Activated naive CD4-positive, alpha-beta T cell treated with anti-CD3 and anti-CD28 coated beads for 36 hours (primary cell): ENCODE measurements at regions of chr12 and their contacts with region 1.

Region 1: DNA sequence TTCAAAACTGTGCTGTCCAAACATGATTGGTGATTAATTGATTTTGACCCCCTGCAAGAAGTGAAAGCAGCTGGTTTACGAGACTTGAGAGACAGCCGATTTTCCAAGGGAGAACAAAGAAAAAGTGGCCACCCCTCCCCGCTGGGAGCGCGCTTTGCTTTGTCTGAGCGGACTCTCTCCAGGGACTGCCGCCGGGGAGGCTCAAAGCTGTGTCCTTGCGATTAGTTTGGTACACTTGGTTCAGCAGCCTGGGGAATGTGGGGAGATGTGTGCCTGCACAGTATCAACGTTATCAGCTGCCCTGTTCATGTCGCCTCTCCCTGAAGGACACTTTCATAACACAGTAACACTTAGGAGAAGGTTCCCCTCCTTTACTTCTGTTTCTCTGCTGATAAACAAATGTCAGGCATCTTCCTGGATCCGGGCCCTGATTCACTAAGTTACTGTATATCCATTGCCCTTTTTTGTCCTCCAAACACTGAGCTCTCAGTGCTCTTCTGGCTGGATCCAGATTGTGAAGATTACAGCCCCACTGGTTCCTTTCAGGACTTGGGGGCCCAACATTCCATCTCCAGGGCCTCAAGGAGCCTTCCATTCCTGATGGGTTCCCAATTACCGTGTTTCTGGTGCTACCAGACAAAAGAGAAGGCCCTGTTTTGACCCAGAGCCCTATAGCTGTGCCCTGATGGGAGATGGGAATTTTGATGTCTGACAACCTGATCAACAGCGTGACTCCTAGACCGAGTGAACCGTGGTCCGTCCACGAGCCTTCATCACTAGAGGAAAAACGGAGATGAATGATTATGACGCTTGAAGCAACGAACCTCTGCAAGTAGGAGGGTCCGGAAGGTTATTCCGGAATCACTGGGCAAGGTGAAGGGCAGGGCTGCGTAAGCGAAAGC is 31.7 kb upstream of the TUBA1C start:
- DNase-seq: no peak
- H3K4me3 Mint-ChIP-seq: peak overlapping the region; percentile 85
- H3K27ac Mint-ChIP-seq: peak overlapping the region; percentile 81
- H3K4me1 Mint-ChIP-seq: peaks cover 12% of the 10 kb centered on the region
- H3K27me3 Mint-ChIP-seq: no peaks in the 10 kb centered on the region

Region 2: DNA sequence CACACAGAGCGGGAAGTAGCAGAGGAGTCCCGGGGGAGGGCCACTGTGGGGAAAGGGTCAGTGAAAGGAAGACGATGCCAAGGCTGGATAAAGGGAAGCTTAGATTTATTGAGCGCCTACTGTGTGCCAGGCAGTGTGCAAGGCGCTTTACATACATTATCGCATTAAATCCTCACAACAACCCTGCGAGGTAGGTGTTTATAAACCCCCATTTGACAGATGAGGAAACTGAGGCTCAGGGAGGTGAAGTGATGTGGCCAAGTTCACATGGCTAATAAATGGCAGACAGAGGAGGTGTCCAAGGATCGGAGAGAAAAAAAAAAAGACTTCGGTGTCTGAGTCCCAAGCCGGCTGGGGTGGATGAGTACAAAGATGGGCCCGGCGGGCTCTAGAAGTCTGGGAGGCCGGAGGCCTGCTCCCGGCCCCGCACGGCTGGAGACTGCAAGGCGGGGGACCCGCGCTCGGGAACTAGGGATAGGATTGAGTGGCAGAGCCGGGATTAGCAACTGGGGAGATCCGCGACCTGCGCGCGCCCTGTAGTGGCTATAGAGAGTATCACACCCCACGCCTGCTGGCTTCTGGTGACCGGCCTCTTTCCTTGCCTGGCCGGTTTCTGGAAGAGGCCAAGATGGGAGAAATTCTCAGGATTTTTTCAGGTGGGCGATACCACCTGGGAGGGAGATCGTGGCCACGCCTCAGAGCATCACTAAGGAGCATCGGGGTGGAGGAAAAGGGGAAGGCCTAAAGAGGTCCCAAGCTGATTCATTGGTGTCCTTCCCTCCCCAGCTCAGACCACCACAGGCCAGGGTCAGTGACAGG is 237.9 kb before region 1 on chr12:
- CTCF ChIA-PET with region 1: interaction called, 4 read pairs
- intact Hi-C with region 1: loop called (anchors 1 kb)
- DNase-seq: peak; percentile 69
- H3K4me3 Mint-ChIP-seq: peak overlapping the region; percentile 10
- H3K27ac Mint-ChIP-seq: no peak overlapping the region
- H3K4me1 Mint-ChIP-seq: peaks cover 33% of the 10 kb centered on the region
- H3K27me3 Mint-ChIP-seq: peaks cover 54% of the 10 kb centered on the region

Region 3: DNA sequence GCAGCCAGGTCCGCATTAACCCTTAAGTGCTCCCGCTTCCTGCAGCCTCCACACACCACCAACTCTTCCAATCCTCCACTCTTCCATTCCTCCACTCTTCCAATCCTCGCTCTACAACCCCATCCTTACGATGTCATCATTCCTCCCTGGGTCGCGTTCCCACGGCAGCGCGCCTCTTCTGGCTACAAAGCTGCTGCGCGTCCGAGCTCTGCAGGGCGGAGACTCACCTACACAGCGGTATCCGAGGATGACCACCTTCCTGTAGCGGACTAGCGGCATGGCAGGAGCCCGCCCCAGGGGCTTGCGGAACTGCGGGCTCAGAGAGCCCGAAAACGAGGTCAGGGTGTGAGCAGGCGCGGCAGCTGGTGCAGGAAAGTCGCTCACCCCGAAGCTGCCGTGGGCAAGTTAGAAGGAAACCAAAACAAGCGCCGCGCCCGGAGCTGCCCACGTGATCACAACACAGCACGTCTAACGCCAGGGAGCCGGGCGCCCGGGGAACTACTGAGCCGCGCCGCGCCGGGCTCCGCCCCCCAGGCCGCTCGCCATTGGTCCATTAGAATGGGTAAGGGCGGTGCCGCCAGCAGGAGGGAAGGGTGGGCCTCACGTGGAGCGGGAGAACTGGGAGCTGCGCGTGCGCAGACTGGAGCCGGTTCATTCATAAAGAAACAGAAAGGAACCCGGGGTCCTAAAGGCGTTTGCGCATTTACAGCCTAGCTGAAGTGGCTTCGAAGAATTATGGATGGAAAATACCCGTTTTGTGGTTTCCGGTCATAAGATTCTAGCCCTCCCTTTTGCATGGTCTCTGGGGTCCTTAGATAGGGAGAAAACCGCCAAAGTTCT is 163.5 kb before region 1 on chr12 and contains the start of gene RHEBL1:
- CTCF ChIA-PET with region 1: interaction called, 3 read pairs
- intact Hi-C with region 1: loop called (anchors 1 kb)
- DNase-seq: peak; percentile 100
- H3K4me3 Mint-ChIP-seq: peak within 1 kb of the TSS; percentile 99
- H3K27ac Mint-ChIP-seq: peak within 1 kb of the TSS; percentile 76
- H3K4me1 Mint-ChIP-seq: peaks cover 12% of the 10 kb centered on the region
- H3K27me3 Mint-ChIP-seq: no peaks in the 10 kb centered on the region
- total RNA-seq, gene RHEBL1: 11.8 to 15.2 TPM

Region 4: GRCh38 chr12:49110464-49111155 is 122.6 kb before region 1 on chr12 and contains the start of gene LMBR1L:
- CTCF ChIA-PET with region 1: interaction called, 4 read pairs
- intact Hi-C with region 1: loop called (anchors 1 kb)
- DNase-seq: peak; percentile 98
- H3K4me3 Mint-ChIP-seq: peak within 1 kb of the TSS; percentile 93
- H3K27ac Mint-ChIP-seq: peak within 1 kb of the TSS; percentile 94
- H3K4me1 Mint-ChIP-seq: peaks cover 37% of the 10 kb centered on the region
- H3K27me3 Mint-ChIP-seq: no peaks in the 10 kb centered on the region
- total RNA-seq, gene LMBR1L: 60.1 to 66.8 TPM

Region 5: GRCh38 chr12:49130151-49131050 is 102.8 kb before region 1 on chr12:
- CTCF ChIA-PET with region 1: interaction called, 4 read pairs
- intact Hi-C with region 1: loop called (anchors 1 kb)
- DNase-seq: peak; percentile 96
- H3K4me3 Mint-ChIP-seq: peak overlapping the region; percentile 97
- H3K27ac Mint-ChIP-seq: peak overlapping the region; percentile 100
- H3K4me1 Mint-ChIP-seq: peaks cover 43% of the 10 kb centered on the region
- H3K27me3 Mint-ChIP-seq: no peaks in the 10 kb centered on the region

Region 6: DNA sequence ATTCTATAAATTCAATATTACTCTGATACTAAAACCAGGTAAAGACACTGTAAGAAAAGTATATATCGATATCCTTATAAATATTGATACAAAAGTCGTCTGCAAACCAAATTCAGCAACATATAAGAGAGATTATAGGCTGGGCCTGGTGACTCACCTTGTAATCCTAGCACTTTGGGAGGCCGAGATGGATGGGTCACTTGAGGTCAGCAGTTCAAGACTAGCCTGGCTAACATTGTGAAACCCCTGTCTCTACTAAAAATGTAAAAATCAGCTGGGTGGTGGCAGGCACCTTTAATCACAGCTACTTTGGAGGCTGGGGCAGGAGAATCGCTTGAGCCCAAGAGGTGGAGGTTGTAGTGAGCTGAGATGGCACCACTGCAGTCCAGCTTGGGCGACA is 18.2 kb after region 1 on chr12:
- CTCF ChIA-PET with region 1: no interaction called
- intact Hi-C with region 1: no loop called
- DNase-seq: no peak
- H3K4me3 Mint-ChIP-seq: no peak overlapping the region
- H3K27ac Mint-ChIP-seq: no peak overlapping the region
- H3K4me1 Mint-ChIP-seq: no peaks in the 10 kb centered on the region
- H3K27me3 Mint-ChIP-seq: no peaks in the 10 kb centered on the region